Right cardiac atrium (tissue), 5 donors: ENCODE measurements at regions of chr9 and their contacts with region 1.

Region 1: DNA sequence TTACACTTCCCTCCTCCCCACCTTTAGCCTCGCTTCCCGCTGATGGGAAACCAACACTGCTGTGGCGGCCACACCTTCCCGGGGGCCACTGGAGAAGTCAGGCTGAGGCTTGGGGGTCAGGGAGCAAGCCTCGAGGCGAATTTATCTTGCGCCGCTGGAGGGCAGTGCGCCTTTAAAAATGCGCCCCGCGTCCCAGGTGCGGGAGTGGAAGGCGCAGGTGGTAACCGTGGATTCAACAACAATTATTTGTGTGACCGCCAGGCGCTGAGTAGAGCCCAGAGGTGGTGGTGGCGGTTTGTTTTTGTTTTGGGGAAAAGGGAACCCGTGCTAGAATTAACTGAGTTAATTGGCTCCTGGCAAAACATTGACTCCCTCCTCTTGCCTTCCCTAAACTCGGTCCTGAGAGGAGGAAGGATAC is 1.1 kb downstream of the CFAP77 start:
- DNase-seq: peak; percentile 28 to 72 (median 72)
- ATAC-seq: peak; percentile 4 to 32
- H3K4me3 ChIP-seq: peak overlapping the region; percentile 89
- H3K27ac ChIP-seq: no peak overlapping the region
- H3K4me1 ChIP-seq: peaks cover 9% of the 10 kb centered on the region
- H3K27me3 ChIP-seq: no peaks in the 10 kb centered on the region

Region 2: DNA sequence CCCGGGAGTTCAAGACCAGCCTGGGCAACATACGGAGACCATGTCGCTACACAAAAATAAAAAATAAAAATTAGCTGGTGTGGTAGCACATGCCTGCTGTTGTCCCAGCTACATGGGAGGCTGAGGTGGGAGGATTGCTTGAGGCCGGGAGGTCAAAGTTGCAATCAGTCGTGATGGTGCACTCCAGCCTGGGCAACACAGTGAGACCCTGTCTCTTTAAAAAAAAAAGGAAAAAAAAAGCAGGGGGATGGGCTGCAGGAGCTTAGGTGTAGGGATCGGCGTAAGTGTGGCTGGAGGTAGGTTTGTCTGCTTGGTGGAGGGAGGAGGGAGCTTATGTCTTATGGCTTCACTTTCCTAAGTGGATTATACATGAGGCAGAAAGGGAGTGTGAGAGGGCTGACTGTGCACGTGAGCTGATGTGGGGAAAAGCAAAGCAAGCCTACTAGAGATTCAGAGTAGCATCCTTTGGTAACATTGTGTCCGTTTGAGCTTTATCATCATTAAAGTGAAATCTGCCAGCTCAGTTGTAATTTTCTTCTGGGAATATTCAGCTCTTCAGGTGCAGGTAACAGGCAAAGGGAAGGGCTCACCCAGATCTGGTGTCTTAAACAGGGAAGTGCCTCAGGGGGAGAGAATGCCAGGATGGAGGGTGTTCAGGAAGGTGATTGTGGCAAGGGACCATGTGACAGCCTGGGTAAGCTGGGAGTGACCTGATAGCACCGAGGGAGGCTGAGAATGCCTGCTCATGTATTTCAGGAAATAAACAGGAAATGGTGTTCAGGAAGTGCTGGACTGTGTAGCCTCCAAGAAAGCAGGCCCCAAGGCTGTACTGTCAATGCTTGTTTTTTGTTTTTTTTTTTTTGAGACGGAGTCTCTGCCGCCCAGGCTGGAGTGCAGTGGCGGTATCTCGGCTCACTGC is 38.7 kb before region 1 on chr9:
- intact Hi-C with region 1: no loop called
- DNase-seq: peak; percentile 42 to 73 (median 66)
- ATAC-seq: peak; percentile 93 to 95
- H3K4me3 ChIP-seq: no peak overlapping the region
- H3K27ac ChIP-seq: peak overlapping the region; percentile 80
- H3K4me1 ChIP-seq: no peaks in the 10 kb centered on the region
- H3K27me3 ChIP-seq: no peaks in the 10 kb centered on the region

Region 3: DNA sequence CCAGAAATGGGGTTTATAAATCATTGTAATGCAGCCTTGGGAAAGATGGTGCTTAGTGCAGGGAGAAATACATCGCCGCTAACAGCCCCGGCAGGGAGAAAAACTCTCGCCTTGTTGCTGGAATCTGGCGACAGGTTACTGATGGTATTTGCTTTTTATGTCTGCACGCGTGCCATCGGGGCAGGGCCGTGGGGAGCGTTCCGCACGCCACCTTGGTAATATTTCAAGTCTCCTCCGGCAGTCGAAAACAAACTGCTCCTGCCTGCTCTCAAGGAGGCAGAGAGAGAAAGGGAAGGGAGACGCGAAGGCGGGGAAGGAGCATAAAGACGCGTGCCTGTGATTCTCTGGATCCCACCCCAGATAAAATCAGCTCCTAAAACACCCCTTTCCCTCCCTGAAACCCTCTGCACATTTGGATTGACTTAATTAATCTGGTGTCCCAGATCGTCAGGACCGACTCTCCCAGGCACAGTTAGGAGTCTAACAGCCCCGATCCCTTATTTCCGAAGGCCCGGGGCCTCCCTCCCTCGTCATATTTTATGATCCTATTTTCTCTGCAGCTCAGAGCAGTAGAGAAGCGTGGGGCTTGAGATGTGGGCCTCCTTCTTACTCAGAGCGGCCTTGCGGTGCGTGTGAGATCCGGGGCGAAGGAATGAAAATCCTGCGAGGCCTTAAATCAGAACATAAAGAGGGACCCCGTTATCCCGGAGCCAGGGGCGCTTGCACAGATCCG is 46.6 kb after region 1 on chr9:
- intact Hi-C with region 1: no loop called
- DNase-seq: no peak
- ATAC-seq: no peak
- H3K4me3 ChIP-seq: no peak overlapping the region
- H3K27ac ChIP-seq: no peak overlapping the region
- H3K4me1 ChIP-seq: no peaks in the 10 kb centered on the region
- H3K27me3 ChIP-seq: no peaks in the 10 kb centered on the region

Region 4: GRCh38 chr9:132575005-132575609 is 164.0 kb after region 1 on chr9:
- intact Hi-C with region 1: loop called in 3 of 4 experiments (anchors 5 to 10 kb)
- DNase-seq: peak; percentile 75 to 88 (median 87)
- ATAC-seq: peak; percentile 81 to 82
- H3K4me3 ChIP-seq: no peak overlapping the region
- H3K27ac ChIP-seq: no peak overlapping the region
- H3K4me1 ChIP-seq: no peaks in the 10 kb centered on the region
- H3K27me3 ChIP-seq: no peaks in the 10 kb centered on the region